ENCODE measurements at regions of chr3 and their contacts with region 1.

Region 1: GRCh38 chr3:18424729-18425640 is at the start of gene SATB1:
- DNase-seq: peak; percentile 92
- H3K4me3 ChIP-seq: peak within 1 kb of the TSS; percentile 85 to 92 (median 88)
- H3K27ac ChIP-seq: peak within 1 kb of the TSS; percentile 84 to 95 (median 92)
- H3K4me1 ChIP-seq: peaks cover 0 to 41% (median 23%) of the 10 kb centered on the region in 4 donors
- H3K27me3 ChIP-seq: no peaks in the 10 kb centered on the region
- CTCF ChIP-seq: no peak
- EP300 ChIP-seq: no peak
- POLR2A ChIP-seq: no peak
- total RNA-seq, gene SATB1: 56.7 to 135 (median 93.4) TPM

Region 2: DNA sequence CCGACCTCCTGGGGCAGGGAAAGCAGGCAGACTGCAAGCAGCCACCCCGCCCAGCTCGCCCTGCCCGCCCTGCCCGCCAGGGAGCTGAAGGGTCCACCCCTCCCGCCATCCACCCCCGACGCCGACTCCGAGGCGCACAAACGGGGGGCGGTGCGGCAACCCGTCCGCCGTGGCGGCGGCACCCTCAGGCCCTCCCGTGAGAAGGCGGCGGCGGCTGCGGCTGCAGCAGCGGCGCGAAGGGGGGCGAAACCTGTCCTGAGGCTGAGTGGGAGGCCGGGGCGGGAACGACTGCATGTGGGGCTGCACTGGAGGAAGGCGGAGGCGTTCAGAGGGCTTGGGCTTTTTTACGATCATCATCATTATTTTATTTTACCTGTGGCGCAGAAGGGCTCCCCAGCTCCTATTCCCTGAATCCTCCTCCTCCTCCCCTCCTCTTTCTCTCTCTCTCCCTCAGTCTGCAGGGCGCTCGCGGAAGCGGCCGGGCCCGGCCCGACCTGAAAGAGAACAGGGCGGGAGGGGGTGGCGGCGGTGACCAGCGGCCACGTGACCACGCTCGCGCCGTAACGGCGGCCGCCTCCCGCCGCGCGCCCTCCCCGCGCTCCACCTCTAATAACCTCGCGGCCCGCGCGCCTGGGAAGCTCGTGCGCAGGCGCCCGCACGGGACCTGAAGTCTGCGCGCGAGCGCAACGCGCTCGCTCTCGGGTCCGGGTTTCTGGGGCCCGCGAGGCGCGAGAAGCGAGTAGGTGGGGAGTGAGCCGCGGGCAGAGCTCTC is 682.7 kb before region 1 on chr3 and contains the start of gene TBC1D5:
- intact Hi-C with region 1: loop called (anchors 10 kb)
- DNase-seq: peak; percentile 99
- H3K4me3 ChIP-seq: peak within 1 kb of the TSS; percentile 76 to 95 (median 94)
- H3K27ac ChIP-seq: peak within 1 kb of the TSS; percentile 97 to 100 (median 98)
- H3K4me1 ChIP-seq: peaks cover 0 to 37% (median 30%) of the 10 kb centered on the region in 4 donors
- H3K27me3 ChIP-seq: no peaks in the 10 kb centered on the region
- CTCF ChIP-seq: peak in 2 of 4 experiments; percentile 5 to 16
- EP300 ChIP-seq: peak in 1 of 4 donors; percentile 35
- POLR2A ChIP-seq: peak; percentile 70 to 71
- total RNA-seq, gene TBC1D5: 43.7 to 82.3 (median 50.8) TPM

Region 3: DNA sequence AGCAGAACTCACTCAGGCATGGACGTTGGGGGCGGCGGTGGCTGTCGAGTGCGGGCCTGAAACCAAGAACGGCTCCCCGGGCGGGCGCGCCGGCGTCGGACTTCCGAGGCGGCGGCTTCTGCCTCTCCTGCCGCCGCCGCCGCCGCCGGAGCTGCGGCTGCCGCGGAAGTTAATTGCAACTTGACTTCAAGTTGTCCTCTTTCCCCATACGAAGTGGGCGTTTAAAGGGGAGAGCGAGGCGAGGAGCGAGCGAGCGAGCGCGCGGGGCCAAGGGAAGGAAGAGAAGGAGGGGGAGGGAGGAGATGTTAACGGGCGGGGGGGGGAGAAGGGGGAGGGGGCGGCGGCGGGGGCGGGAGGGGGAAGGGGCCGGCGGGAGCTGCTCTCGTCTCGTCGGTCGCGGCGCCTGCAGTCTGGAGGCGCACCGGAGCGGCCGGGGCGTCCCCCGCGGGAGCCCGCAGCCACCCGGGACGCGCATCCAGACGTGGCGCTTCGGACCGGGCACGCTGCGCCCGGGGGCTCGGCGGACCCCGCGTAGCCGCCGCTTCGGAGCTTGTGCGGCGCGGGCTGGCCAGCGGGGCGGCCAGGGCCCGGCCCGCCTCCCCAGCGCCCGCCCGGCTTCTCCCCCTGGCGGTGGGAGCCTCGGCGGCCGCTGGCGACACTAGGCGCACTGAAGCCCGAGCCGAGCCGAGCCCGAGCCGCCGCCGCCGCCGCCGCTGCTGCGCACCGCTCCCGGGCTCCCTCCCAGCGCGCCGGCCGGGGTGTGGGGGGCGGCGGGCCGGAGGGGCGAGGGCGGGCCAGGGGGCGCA is 19.8 kb after region 1 on chr3:
- intact Hi-C with region 1: loop called (anchors 1 kb)
- DNase-seq: peak; percentile 82
- H3K4me3 ChIP-seq: peak overlapping the region; percentile 52 to 71 (median 69)
- H3K27ac ChIP-seq: peak overlapping the region; percentile 63 to 89 (median 82)
- H3K4me1 ChIP-seq: peaks cover 0 to 31% (median 27%) of the 10 kb centered on the region in 4 donors
- H3K27me3 ChIP-seq: no peaks in the 10 kb centered on the region
- CTCF ChIP-seq: peak in 1 of 4 experiments; percentile 19
- EP300 ChIP-seq: no peak
- POLR2A ChIP-seq: no peak